Mammary epithelial cell (primary cell): ENCODE measurements at regions of chr14 and their contacts with region 1.

Region 1: GRCh38 chr14:23722675-23723074 is 86.5 kb downstream of the DHRS2 start:
- DNase-seq: no peak
- H3K4me3 ChIP-seq: no peak overlapping the region
- H3K27ac ChIP-seq: no peak overlapping the region
- H3K4me1 ChIP-seq: peaks cover 8% of the 10 kb centered on the region
- H3K27me3 ChIP-seq: no peaks in the 10 kb centered on the region
- CTCF ChIP-seq: no peak

Region 2: DNA sequence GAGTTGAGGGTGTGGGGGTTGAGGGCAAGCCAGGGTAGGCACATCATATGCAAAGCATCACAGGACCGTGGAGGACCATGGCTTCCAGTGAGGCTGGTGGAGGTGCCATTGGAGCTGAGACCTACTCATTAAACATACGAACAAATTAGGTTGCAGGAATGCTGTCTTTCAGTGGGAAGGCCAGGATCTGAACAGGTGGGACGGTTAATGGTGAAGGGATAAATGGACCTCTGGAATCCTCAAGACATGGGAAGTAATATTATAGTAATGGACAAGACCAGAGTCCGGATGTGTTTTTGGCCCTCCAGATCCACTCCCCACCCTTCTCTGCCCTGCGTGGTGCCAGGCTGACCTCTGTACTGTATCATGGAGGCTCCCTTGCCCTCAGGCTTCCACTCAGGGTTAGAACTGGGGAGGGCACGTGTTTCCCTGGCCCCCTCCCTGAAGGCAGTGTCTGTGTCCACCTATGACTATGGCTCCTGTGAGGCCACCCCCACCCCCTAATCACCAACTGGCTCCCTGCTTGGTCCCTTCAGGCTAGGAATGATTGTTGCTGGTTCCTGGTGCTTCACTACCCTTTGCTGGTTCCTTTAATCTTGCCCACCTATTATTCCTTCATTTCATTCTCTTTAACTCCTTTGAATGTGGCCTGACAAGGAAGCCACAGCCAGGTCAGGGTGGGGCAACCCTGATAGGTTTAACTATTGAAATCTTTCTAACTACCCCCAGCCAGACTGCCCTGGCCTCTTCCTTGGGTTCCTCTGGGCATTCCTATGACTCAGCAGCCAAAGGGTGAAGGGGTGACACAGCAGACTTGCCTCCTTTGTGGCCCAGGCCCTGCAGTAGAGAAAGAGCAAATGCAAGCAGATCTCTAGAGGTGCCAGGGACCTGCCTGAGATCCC is 75.8 kb before region 1 on chr14:
- CTCF ChIA-PET with region 1: no interaction called
- dilution Hi-C with region 1: loop called (anchors 5 kb)
- in situ Hi-C with region 1: no loop called
- intact Hi-C with region 1: no loop called
- DNase-seq: peak; percentile 54
- H3K4me3 ChIP-seq: no peak overlapping the region
- H3K27ac ChIP-seq: no peak overlapping the region
- H3K4me1 ChIP-seq: no peaks in the 10 kb centered on the region
- H3K27me3 ChIP-seq: no peaks in the 10 kb centered on the region
- CTCF ChIP-seq: no peak

Region 3: DNA sequence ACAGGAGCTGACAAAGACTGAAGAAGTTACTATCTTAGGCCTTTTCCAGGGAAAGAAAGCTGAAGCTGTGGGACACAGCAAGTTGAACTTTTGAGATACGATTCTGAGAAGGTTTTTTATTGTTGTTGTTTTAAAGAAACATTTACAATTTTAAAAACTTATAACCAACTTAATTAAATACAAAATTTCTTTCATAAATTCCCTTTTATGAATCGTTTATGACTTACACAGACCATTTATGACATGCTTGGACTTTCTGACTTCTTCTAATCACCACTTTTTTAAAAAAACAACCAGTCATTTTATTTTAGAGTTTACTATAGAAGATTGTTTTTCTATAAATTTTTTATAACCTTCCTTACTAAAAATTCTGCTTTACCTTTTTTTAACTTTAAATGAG is 17.8 kb before region 1 on chr14:
- CTCF ChIA-PET with region 1: no interaction called
- dilution Hi-C with region 1: no loop called
- in situ Hi-C with region 1: no loop called
- intact Hi-C with region 1: no loop called
- DNase-seq: no peak
- H3K4me3 ChIP-seq: no peak overlapping the region
- H3K27ac ChIP-seq: no peak overlapping the region
- H3K4me1 ChIP-seq: no peaks in the 10 kb centered on the region
- H3K27me3 ChIP-seq: no peaks in the 10 kb centered on the region
- CTCF ChIP-seq: no peak